Dendritic cell treated with granulocyte-macrophage colony-stimulating factor and Interleukin-4, amounts not matched to agents 40 ng/mL and 50 ng/mL, for 4 days (primary cell): ENCODE measurements at regions of chr2 and their contacts with region 1.

Region 1: GRCh38 chr2:156356014-156356754 is 23.7 kb upstream of the NR4A2 start:
- H3K4me3 Mint-ChIP-seq: no peak overlapping the region
- H3K27ac Mint-ChIP-seq: peak overlapping the region; percentile 73
- H3K4me1 Mint-ChIP-seq: peaks cover 15% of the 10 kb centered on the region
- H3K27me3 Mint-ChIP-seq: peaks cover 2% of the 10 kb centered on the region

Region 2: DNA sequence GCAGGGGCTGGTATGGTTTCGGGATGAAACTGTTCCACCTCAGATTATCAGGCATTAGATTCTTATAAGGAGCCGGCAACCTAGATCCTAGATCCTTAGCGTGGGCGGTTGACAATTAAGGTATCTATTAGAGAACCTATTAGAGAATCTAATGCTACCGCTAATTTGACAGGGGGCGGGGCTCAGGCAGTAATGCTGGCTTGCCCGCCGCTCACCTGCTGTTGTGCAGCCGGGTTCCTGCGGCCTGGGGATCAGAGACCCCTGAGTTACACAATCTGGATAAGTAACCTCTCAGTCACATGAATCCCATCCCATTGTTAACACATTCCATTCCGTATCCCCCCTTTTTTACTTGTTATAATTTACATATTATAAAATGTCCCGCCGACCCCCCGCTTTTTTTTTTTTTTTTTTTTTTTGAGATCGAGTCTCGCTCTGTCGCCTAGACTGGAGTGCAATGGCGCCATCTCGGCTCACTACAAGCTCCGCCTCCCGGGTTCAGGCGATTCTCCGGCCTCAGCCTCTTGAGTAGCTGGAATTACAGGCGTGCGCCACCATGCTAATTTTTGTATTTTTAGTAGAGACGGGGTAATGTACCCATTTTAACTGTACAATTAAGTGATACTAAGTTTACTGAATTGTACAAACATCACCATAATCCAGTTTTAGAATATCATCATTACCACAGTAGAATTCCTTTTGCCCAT is 38.0 kb after region 1 on chr2:
- intact Hi-C with region 1: loop called (anchors 5 kb)
- H3K4me3 Mint-ChIP-seq: no peak overlapping the region
- H3K27ac Mint-ChIP-seq: no peak overlapping the region
- H3K4me1 Mint-ChIP-seq: peaks cover 31% of the 10 kb centered on the region
- H3K27me3 Mint-ChIP-seq: peaks cover 8% of the 10 kb centered on the region